MCF 10A (cell line): ENCODE measurements at regions of chr7 and their contacts with region 1.

Region 1: DNA sequence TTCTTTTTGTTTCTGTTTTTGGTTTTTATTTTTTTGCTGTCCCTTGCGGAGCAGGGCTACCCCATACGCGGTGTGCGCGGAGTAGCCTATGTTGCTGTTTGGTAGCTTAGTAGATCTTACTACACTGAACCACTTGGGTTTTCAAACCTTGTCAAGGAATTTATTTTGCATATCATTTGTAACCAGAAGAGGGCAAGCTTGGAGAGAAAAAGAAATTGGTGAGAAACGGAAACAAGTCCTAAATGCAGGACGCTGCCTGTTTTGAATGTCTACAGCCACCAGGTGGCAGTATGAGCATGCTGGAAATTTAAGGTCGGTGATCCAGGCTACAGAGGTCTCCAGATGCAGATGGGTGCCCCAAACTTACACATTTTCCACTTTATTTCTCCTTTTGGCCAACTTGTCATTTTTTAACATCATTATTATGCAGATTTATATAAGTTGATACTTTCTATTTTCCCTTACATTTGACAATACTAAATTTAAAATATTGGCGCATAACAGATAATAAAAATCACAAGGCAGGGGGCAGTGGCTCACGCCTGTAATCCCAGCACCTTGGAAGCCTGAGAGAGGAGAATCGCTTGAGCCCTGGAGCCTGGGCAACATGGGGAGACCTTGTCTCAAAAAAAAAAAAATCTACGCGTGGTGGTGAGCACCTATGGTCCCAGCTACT is 15.3 kb upstream of the TRA2A start:
- DNase-seq: peak; percentile 88
- H3K4me3 Mint-ChIP-seq: no peak overlapping the region
- H3K27ac Mint-ChIP-seq: no peak overlapping the region
- H3K4me1 Mint-ChIP-seq: peaks cover 12% of the 10 kb centered on the region
- H3K27me3 Mint-ChIP-seq: no peaks in the 10 kb centered on the region
- CTCF ChIP-seq: peak; percentile 89

Region 2: DNA sequence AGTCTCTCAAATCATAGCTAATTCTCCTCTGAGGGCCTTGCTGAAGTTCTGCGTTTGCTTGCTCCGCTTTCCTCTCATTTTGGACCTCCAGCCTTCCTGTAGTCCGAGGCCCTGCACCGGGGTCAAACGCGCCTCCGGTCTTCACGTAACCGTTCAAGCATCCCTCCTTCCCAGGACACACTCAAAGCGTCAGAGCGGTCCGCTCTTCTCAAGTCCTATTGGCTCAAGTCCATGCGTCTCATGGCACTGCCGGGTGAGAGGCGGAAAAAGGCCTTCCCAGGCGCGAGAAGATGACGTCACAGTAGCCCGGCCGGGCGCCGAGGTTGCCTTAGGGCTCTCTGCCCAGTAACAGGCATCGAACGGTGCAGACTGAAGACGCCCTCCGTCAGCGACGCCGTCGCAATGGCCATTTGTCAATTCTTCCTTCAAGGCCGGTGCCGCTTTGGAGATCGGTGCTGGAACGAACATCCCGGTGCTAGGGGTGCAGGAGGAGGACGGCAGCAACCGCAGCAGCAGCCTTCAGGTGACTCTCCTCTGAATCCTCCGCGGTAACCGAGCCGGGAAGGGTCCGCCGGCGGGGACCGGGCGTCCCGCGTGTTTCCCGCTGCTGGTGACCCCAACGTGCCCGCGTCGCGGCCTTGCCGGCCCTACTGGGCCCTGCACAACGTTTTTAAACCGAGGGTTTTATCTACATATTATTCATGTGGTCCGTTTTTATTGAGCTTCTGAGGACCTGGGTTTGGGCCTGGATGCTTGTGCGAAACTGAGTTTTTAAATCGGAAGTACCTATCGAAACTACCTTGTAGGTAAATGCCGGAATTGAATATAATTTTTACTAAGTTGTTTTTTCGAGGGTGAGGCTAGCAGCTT is 365.1 kb before region 1 on chr7 and contains the start of gene NUP42:
- CTCF ChIA-PET with region 1: interaction called, 6 read pairs
- POLR2A ChIA-PET with region 1: no interaction called
- intact Hi-C with region 1: loop called (anchors 1 kb)
- DNase-seq: peak; percentile 98
- H3K4me3 Mint-ChIP-seq: peak within 1 kb of the TSS; percentile 90
- H3K27ac Mint-ChIP-seq: peak within 1 kb of the TSS; percentile 96
- H3K4me1 Mint-ChIP-seq: peaks cover 17% of the 10 kb centered on the region
- H3K27me3 Mint-ChIP-seq: no peaks in the 10 kb centered on the region
- CTCF ChIP-seq: no peak
- total RNA-seq, gene NUP42: 41.3 and 42.0 TPM in 2 replicates

Region 3: DNA sequence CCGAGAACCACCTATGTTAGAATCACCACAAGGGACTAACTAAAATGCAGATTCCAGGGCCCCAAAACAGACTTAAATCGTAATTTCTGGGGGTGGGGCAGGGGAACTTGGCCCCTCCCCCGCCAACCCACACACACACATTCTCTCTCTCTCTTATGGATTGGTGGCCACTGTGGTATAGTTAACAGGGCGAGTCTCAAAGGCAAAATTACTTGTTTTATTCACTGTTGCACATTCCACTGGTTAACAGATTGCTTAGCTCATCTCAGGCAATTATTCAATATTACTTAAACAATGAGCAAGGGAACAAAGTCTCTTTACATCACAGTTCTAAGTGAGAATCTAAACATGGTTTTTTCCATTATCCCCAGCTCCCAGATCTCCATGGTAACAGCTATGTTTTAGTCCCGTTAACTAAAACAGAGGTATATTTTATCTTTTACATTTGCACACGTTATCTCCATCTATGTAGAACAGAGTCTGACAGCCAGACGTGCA is 115.3 kb before region 1 on chr7:
- CTCF ChIA-PET with region 1: interaction called, 26 read pairs
- POLR2A ChIA-PET with region 1: interaction called, 3 read pairs
- intact Hi-C with region 1: loop called (anchors 1 kb)
- DNase-seq: no peak
- H3K4me3 Mint-ChIP-seq: no peak overlapping the region
- H3K27ac Mint-ChIP-seq: peak overlapping the region; percentile 12
- H3K4me1 Mint-ChIP-seq: peaks cover 21% of the 10 kb centered on the region
- H3K27me3 Mint-ChIP-seq: no peaks in the 10 kb centered on the region
- CTCF ChIP-seq: no peak

Region 4: DNA sequence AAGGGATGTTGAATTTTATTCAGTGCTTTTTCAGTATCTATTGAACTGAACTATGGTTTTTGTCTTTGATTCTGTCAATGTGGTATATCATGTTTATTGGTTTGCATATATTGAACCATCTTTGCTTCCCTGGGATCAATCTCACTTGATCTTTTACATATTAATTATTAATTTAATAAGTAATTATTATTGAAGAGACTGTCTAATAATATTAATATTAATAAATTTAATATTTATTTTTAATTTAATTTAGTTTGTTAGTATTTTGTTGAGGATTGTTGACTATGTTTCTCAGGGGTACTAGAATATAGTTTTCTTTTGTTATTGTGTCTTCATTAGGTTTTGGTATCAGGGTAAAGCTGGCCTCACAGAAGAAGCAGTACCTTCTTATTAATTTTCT is 11.3 kb after region 1 on chr7:
- CTCF ChIA-PET with region 1: interaction called, 12 read pairs
- POLR2A ChIA-PET with region 1: interaction called, 3 read pairs
- intact Hi-C with region 1: no loop called
- DNase-seq: no peak
- H3K4me3 Mint-ChIP-seq: no peak overlapping the region
- H3K27ac Mint-ChIP-seq: no peak overlapping the region
- H3K4me1 Mint-ChIP-seq: no peaks in the 10 kb centered on the region
- H3K27me3 Mint-ChIP-seq: peaks cover 9% of the 10 kb centered on the region
- CTCF ChIP-seq: no peak

Region 5: GRCh38 chr7:23712368-23713284 is 165.6 kb after region 1 on chr7:
- CTCF ChIA-PET with region 1: interaction called, 34 read pairs
- POLR2A ChIA-PET with region 1: interaction called, 4 read pairs
- intact Hi-C with region 1: loop called (anchors 1 kb)
- DNase-seq: peak; percentile 69
- H3K4me3 Mint-ChIP-seq: no peak overlapping the region
- H3K27ac Mint-ChIP-seq: peak overlapping the region; percentile 27
- H3K4me1 Mint-ChIP-seq: peaks cover 17% of the 10 kb centered on the region
- H3K27me3 Mint-ChIP-seq: no peaks in the 10 kb centered on the region
- CTCF ChIP-seq: peak; percentile 52

Region 6: DNA sequence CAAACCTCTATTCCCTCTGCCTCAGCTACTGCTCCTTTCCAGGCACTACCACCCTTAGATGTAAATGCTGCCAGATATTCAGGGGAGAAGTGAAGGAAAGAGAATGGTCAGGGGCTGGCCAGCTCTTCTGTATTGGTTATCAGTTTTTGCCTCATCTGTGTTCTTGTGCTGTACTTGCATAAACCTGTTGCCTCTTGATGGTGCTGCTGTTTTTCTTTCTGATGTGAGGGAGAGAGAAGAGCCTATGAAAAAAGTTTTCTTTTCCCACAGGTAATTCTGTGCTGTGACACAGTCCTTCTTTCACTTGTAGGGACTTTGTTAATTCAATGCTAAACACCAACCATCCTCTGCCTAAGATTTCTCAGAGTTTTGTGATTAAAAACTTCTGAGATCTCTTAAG is 220.5 kb after region 1 on chr7:
- CTCF ChIA-PET with region 1: no interaction called
- POLR2A ChIA-PET with region 1: no interaction called
- intact Hi-C with region 1: no loop called
- DNase-seq: no peak
- H3K4me3 Mint-ChIP-seq: no peak overlapping the region
- H3K27ac Mint-ChIP-seq: no peak overlapping the region
- H3K4me1 Mint-ChIP-seq: peaks cover 5% of the 10 kb centered on the region
- H3K27me3 Mint-ChIP-seq: no peaks in the 10 kb centered on the region
- CTCF ChIP-seq: no peak

Region 7: GRCh38 chr7:24178811-24179570 is 632.0 kb after region 1 on chr7:
- CTCF ChIA-PET with region 1: no interaction called
- POLR2A ChIA-PET with region 1: no interaction called
- intact Hi-C with region 1: no loop called
- DNase-seq: no peak
- H3K4me3 Mint-ChIP-seq: no peak overlapping the region
- H3K27ac Mint-ChIP-seq: no peak overlapping the region
- H3K4me1 Mint-ChIP-seq: no peaks in the 10 kb centered on the region
- H3K27me3 Mint-ChIP-seq: no peaks in the 10 kb centered on the region
- CTCF ChIP-seq: no peak